ENCODE measurements at regions of chrX and their contacts with region 1.

Region 1: DNA sequence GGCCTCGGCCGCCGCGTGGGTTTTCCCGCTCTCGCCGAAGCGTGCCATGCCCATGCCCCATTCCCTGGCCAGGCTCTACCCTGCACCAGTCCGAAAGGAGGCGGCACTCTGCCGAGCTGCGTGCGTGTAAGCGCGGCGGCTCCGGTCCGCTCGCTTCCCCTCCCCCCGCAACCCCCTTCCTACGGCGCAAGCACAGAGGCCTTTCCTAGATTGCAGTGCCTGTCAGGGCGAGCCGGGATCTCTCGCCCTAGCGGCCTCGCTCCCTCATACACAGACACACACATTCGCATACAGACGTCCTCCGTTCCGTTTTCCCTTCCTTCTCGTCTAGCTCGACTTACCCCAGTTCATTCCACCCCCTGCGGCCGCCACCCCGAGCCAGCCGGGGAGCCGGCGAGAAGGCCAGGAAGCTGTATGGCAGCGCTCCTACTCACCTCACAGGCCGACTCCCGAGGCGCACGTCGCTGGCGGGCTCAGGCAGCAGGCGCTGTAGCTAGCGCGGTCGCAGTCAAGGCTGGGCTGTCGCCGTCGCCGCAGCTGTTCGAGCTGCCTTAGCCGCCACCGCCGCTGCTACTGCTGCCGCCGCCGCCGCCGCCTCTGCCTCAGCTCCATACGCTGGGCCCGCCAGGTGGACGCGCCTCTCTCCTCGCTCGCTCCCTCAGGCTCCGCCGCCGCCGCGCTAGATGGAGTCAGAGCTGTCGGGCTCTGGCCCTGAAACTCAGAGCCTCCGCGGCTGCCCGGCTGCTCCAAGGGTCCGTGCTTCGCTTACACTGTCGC is 615 bp downstream of the NEXMIF start:
- DNase-seq: peak; percentile 18 to 45 (median 29)
- H3K4me3 ChIP-seq: peak overlapping the region in 1 of 2 donors; percentile 40
- H3K4me3 Mint-ChIP-seq: peak overlapping the region; percentile 79 to 98 (median 88)
- H3K27ac ChIP-seq: peak overlapping the region; percentile 4
- H3K27ac Mint-ChIP-seq: peak overlapping the region in 6 of 7 donors; percentile 31 to 74 (median 47)
- H3K4me1 ChIP-seq: no peaks in the 10 kb centered on the region
- H3K4me1 Mint-ChIP-seq: peaks cover 0 to 8% (median 3%) of the 10 kb centered on the region in 4 donors
- H3K27me3 ChIP-seq: no peaks in the 10 kb centered on the region
- H3K27me3 Mint-ChIP-seq: peaks cover 3 to 7% of the 10 kb centered on the region in 2 donors

Region 2: DNA sequence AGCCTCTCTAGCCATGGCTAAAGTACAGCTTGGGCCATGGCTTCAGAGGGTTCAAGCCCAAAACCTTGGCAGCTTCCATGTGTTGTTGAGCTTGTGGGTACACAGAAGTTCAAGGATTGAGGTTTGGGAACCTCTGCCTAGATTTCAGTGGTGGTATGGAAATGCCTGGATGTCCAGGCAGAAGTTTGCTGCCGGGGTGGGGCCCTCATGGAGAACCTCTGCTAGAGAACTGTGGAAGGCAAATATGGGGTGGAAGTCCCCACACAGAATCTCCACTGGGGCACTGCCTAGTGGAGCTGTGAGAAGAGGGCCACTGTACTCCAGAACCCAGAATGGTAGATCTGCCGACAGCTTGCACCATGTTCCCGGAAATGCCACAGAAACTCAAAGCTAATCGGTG is 58.9 kb before region 1 on chrX:
- CTCF ChIA-PET with region 1: no interaction called
- POLR2A ChIA-PET with region 1: no interaction called
- intact Hi-C with region 1: no loop called
- DNase-seq: no peak
- H3K4me3 ChIP-seq: no peak overlapping the region
- H3K4me3 Mint-ChIP-seq: no peak overlapping the region
- H3K27ac ChIP-seq: no peak overlapping the region
- H3K27ac Mint-ChIP-seq: no peak overlapping the region
- H3K4me1 ChIP-seq: no peaks in the 10 kb centered on the region
- H3K4me1 Mint-ChIP-seq: no peaks in the 10 kb centered on the region
- H3K27me3 ChIP-seq: no peaks in the 10 kb centered on the region
- H3K27me3 Mint-ChIP-seq: no peaks in the 10 kb centered on the region

Region 3: DNA sequence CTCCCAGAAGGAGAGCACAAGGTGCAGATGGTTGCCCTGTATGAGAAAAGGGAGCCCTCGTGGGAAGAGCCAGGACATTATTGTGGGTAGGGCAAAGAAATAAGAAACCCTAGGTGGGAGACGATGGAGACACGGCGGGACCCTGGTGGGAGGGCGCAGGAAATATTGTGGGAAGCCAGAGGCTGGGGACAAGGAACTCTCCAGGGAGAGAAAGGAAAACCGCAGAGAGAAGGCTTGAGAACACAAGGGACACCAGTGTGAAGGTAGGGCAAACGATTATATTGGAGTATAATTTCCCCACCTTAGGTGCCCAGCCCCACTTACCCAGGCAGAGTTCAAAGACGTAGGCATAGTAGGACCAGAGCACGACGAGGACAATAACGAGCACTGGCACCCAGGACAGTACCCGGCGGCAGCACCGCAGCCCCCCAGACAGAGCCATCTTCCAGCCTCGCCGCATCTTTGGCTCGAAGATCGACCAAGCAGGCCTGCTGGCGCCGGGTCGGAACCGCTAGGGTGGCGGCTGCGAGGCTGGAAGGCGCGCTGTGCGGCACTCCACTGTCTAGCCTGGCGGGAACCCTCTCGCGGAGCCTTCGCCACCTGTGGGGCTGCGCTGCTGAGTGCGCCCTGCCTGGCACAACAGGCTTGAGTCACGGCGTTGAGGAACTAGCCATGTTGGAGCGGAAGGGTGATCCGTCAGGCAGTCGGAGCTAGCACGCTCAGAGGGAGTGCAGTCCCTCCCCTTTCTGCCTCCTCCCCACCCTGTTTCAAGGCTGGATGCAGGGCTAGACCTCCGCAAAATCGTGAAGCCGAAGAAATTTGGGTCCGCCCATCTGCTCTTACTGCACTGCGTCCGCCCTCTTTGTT is 598.2 kb after region 1 on chrX and contains the start of gene ZDHHC15:
- CTCF ChIA-PET with region 1: no interaction called
- POLR2A ChIA-PET with region 1: no interaction called
- intact Hi-C with region 1: loop called (anchors 10 kb)
- DNase-seq: peak; percentile 33 to 66 (median 37)
- H3K4me3 ChIP-seq: peak within 1 kb of the TSS; percentile 40 to 47
- H3K4me3 Mint-ChIP-seq: peak within 1 kb of the TSS; percentile 86 to 94 (median 90)
- H3K27ac ChIP-seq: no peak within 1 kb of the TSS
- H3K27ac Mint-ChIP-seq: peak within 1 kb of the TSS; percentile 57 to 95 (median 80)
- H3K4me1 ChIP-seq: peaks cover 8% of the 10 kb centered on the region
- H3K4me1 Mint-ChIP-seq: peaks cover 13 to 23% (median 20%) of the 10 kb centered on the region in 4 donors
- H3K27me3 ChIP-seq: no peaks in the 10 kb centered on the region
- H3K27me3 Mint-ChIP-seq: no peaks in the 10 kb centered on the region
- total RNA-seq, gene ZDHHC15: 0.47 to 0.53 TPM

Measured in CD4-positive, alpha-beta memory T cell (primary cell).